Naive thymus-derived CD4-positive, alpha-beta T cell (primary cell): ENCODE measurements at regions of chr12 and their contacts with region 1.

Region 1: DNA sequence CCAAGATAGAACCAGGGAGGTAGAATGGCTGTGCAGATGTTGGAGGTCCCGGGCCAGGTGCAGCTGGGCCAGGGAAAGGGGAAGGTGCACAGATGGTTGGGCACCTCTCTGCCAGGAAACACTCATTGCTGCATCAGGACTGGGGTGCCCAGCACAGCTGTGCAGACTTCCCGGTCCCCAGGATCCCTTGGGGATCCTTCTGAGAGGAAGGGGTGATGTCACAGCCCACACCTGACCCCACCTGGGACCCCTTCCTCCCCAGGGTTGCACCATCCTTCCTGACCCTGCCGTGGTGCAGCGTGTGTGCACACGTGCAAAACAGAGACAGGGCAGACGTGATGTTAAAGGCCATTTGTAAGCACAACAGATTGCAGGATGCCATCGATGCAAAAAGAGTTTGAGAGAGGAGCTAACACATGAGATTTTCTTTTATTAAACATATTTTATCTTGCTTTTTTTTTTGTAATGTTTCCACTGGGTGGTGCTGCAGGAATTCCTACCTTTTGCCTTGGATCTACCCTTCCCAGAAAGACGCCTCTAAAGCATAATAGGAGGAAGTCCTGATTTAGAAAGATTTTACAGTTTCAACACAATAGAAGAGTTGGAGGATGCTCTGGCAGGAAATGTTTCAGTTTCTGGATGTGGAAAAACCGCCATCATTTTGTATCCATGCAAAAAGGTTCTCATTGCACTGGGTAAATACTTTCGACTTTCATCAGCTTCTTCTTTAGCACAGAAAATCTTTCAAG is 14.8 kb downstream of the ELK3 start:
- DNase-seq: no peak
- ATAC-seq: peak; percentile 15
- H3K4me3 ChIP-seq: no peak overlapping the region
- H3K4me3 Mint-ChIP-seq: peak overlapping the region; percentile 69 to 97 (median 85)
- H3K27ac ChIP-seq: peak overlapping the region; percentile 62
- H3K27ac Mint-ChIP-seq: peak overlapping the region; percentile 50 to 99 (median 96)
- H3K4me1 ChIP-seq: peaks cover 64 to 93% of the 10 kb centered on the region in 2 donors
- H3K4me1 Mint-ChIP-seq: peaks cover 70 to 100% (median 98%) of the 10 kb centered on the region in 7 donors
- H3K27me3 ChIP-seq: no peaks in the 10 kb centered on the region
- H3K27me3 Mint-ChIP-seq: no peaks in the 10 kb centered on the region

Region 2: DNA sequence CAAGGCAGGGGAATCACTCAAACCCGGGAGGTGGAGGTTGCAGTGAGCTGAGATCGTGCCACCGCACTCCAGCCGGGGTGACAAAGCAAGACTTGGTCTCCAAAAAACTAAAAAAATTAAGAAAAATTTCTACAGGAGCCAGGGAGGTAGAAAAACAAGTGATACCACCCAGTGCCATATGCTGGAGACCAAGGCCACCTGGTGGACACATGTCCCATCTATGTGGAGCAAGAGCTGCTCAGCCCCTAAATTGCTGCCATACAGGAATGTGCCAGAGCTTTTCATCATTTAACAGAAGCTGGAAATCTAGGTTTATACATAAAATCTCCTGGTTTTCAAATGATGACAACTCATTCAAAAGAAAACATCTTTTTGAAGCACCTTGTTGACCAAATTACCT is 76.2 kb before region 1 on chr12:
- CTCF ChIA-PET with region 1: interaction called, 19 read pairs
- POLR2A ChIA-PET with region 1: no interaction called
- intact Hi-C with region 1: loop called in 1 of 2 experiments (anchors 2 kb)
- DNase-seq: peak in 4 of 9 donors; percentile 9 to 33 (median 24)
- ATAC-seq: no peak
- H3K4me3 ChIP-seq: no peak overlapping the region
- H3K4me3 Mint-ChIP-seq: no peak overlapping the region
- H3K27ac ChIP-seq: no peak overlapping the region
- H3K27ac Mint-ChIP-seq: no peak overlapping the region
- H3K4me1 ChIP-seq: no peaks in the 10 kb centered on the region
- H3K4me1 Mint-ChIP-seq: peaks cover 2 to 14% (median 10%) of the 10 kb centered on the region in 7 donors
- H3K27me3 ChIP-seq: peaks cover 0 to 5% of the 10 kb centered on the region in 2 donors
- H3K27me3 Mint-ChIP-seq: peaks cover 0 to 17% (median 0%) of the 10 kb centered on the region in 5 donors

Region 3: DNA sequence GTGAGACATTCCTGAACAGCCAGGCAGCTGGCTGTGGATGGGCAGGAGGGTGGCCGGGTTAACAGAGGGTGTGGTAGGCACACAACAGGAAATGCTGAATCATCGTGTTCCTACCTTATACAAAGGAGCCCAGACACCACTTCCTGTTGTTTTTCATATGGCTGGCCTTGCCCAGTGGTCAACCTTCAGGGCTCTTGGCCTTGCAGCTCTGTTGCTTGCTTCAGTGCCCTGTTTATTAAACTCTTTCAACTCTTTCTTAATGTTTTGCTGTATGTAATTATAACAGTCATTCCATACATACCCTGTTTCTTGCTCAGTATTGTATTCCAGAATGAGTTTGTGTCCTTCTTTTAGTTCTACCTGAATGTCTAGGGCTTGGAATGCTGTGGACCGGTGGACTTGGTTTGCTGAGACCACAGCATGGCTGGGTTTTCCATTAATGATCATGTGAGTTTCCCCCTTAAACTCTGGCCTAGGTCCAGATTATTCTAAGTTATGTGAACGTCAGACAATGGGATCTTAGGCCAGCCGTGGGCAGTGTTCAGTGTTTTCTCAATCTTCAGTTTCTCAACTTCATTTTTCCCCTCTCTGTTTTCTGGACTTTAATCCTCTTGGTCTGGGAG is 292.3 kb after region 1 on chr12:
- CTCF ChIA-PET with region 1: interaction called, 4 read pairs
- POLR2A ChIA-PET with region 1: interaction called, 3 read pairs
- intact Hi-C with region 1: loop called in 1 of 2 experiments (anchors 5 kb)
- DNase-seq: peak in 1 of 9 donors; percentile 29
- ATAC-seq: peak; percentile 80
- H3K4me3 ChIP-seq: no peak overlapping the region
- H3K4me3 Mint-ChIP-seq: peak overlapping the region in 9 of 10 donors; percentile 18 to 66 (median 48)
- H3K27ac ChIP-seq: no peak overlapping the region
- H3K27ac Mint-ChIP-seq: peak overlapping the region; percentile 28 to 89 (median 63)
- H3K4me1 ChIP-seq: peaks cover 22 to 35% of the 10 kb centered on the region in 2 donors
- H3K4me1 Mint-ChIP-seq: peaks cover 29 to 60% (median 42%) of the 10 kb centered on the region in 7 donors
- H3K27me3 ChIP-seq: no peaks in the 10 kb centered on the region
- H3K27me3 Mint-ChIP-seq: no peaks in the 10 kb centered on the region